ENCODE measurements at regions of chr11 and their contacts with region 1.

Region 1: GRCh38 chr11:74948898-74949747 is at the starts of genes SPCS2 and XRRA1:
- DNase-seq: peak; percentile 99
- ATAC-seq: peak; percentile 99 to 100 (median 100)
- H3K4me3 ChIP-seq: peak within 1 kb of the TSS; percentile 84
- H3K27ac ChIP-seq: peak within 1 kb of the TSS; percentile 89
- H3K4me1 ChIP-seq: peaks cover 24% of the 10 kb centered on the region
- H3K27me3 ChIP-seq: no peaks in the 10 kb centered on the region
- CTCF ChIP-seq: no peak
- total RNA-seq, gene SPCS2: 51.1 to 95.1 (median 63.6) TPM
- total RNA-seq, gene XRRA1: 5.5 to 15.1 (median 7.5) TPM

Region 2: GRCh38 chr11:74371279-74372049 is 577.7 kb before region 1 on chr11:
- intact Hi-C with region 1: no loop called
- DNase-seq: no peak
- ATAC-seq: no peak
- H3K4me3 ChIP-seq: no peak overlapping the region
- H3K27ac ChIP-seq: no peak overlapping the region
- H3K4me1 ChIP-seq: no peaks in the 10 kb centered on the region
- H3K27me3 ChIP-seq: no peaks in the 10 kb centered on the region
- CTCF ChIP-seq: no peak

Region 3: DNA sequence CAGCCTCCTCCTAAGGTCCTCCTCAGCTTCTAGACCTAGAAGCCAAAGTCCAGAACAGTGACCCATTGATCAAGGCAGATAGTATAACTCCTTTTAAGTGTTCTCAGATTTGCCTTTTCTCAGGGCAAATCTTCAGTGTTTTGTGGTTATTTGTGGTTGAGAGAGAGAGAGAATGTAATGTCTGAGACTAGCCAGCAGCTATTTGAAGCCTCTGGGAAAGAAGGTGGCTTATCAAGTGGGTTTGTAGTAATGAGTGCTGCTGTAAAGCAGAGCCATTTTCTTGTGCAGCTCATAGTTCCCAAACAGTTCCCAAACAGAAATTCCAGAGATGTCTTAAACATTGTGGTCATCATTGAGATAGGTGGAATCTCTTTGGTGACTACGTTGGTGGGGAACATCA is 110.9 kb before region 1 on chr11:
- intact Hi-C with region 1: no loop called
- DNase-seq: no peak
- ATAC-seq: no peak
- H3K4me3 ChIP-seq: no peak overlapping the region
- H3K27ac ChIP-seq: no peak overlapping the region
- H3K4me1 ChIP-seq: no peaks in the 10 kb centered on the region
- H3K27me3 ChIP-seq: no peaks in the 10 kb centered on the region
- CTCF ChIP-seq: no peak

Region 4: DNA sequence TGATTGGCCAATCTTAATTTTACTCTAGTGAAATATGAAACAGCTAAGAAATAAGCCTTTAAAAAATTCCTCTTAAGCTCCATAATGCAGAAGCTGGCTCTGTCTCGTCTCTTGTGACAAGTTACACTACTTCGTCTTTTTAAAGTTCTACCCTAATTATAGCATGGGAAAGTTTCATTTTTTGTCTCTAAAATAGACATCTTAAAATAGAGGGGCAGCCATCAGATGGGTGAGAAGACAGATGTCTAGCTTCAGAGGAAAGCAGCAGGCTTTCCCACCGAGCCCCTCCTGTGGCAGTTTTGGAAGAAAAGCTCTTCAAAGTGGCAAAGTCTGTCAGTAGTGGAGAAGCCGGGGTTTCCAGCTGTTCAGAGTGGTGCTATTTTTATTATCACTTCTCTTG is 39.7 kb before region 1 on chr11:
- intact Hi-C with region 1: no loop called
- DNase-seq: no peak
- ATAC-seq: no peak
- H3K4me3 ChIP-seq: no peak overlapping the region
- H3K27ac ChIP-seq: no peak overlapping the region
- H3K4me1 ChIP-seq: peaks cover 4% of the 10 kb centered on the region
- H3K27me3 ChIP-seq: no peaks in the 10 kb centered on the region
- CTCF ChIP-seq: no peak

Region 5: GRCh38 chr11:74988541-74989260 is 39.6 kb after region 1 on chr11 and contains the start of gene NEU3:
- intact Hi-C with region 1: loop called (anchors 2 to 5 kb)
- DNase-seq: peak; percentile 79 to 89
- ATAC-seq: peak; percentile 90 to 94 (median 92)
- H3K4me3 ChIP-seq: peak within 1 kb of the TSS; percentile 95
- H3K27ac ChIP-seq: peak within 1 kb of the TSS; percentile 93
- H3K4me1 ChIP-seq: peaks cover 20% of the 10 kb centered on the region
- H3K27me3 ChIP-seq: no peaks in the 10 kb centered on the region
- CTCF ChIP-seq: no peak
- total RNA-seq, gene NEU3: 14.0 to 26.7 (median 18.0) TPM

Region 6: GRCh38 chr11:75002516-75002915 is 53.4 kb after region 1 on chr11:
- intact Hi-C with region 1: no loop called
- DNase-seq: no peak
- ATAC-seq: no peak
- H3K4me3 ChIP-seq: no peak overlapping the region
- H3K27ac ChIP-seq: no peak overlapping the region
- H3K4me1 ChIP-seq: peaks cover 4% of the 10 kb centered on the region
- H3K27me3 ChIP-seq: no peaks in the 10 kb centered on the region
- CTCF ChIP-seq: no peak

Region 7: GRCh38 chr11:75014129-75014528 is 65.0 kb after region 1 on chr11:
- intact Hi-C with region 1: loop called in 1 of 2 experiments (anchors 5 kb)
- DNase-seq: peak in 1 of 2 donors; percentile 68
- ATAC-seq: peak; percentile 92 to 93 (median 93)
- H3K4me3 ChIP-seq: no peak overlapping the region
- H3K27ac ChIP-seq: peak overlapping the region; percentile 92
- H3K4me1 ChIP-seq: peaks cover 57% of the 10 kb centered on the region
- H3K27me3 ChIP-seq: no peaks in the 10 kb centered on the region
- CTCF ChIP-seq: peak; percentile 22